GM23248 (cell line): ENCODE measurements at regions of chr5 and their contacts with region 1.

Region 1: DNA sequence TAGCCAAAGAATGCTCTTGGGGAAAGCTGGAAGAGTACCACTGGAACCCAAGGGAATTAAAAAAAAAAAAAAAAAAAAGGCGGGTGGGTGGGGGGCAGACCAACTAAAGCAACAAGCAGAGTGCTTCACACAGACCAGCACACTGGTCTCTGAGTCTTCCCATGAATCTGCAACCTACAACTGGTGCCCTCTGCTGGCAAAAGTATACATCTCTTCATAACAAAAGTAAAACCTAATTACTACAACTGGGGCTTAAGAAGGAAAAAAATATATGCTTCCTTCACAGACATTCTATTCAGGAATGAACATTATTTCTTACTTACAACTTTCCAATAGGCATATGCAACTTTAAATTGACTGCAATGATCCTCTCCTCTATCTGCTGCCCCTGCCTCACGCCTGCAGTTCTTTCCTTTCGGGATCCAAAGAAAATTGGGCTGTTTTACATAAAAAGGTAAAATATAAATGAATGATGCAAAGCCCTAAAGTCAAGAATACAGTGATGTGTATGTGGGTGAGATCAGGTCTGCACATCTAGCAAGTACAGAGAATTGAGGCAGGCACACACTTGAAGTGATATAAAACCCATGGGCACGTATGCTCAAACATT is 7.2 kb upstream of the KLHL3 start:
- DNase-seq: peak; percentile 84
- H3K4me3 ChIP-seq: no peak overlapping the region
- H3K27ac ChIP-seq: no peak overlapping the region
- H3K4me1 ChIP-seq: no peaks in the 10 kb centered on the region
- H3K27me3 ChIP-seq: no peaks in the 10 kb centered on the region

Region 2: GRCh38 chr5:137264573-137264972 is 478.6 kb before region 1 on chr5:
- in situ Hi-C with region 1: no loop called
- DNase-seq: peak; percentile 92
- H3K4me3 ChIP-seq: 0 out of 2 replicates have a peak overlapping the region, but pooled peaks have one; percentile 10
- H3K27ac ChIP-seq: peak overlapping the region; percentile 57
- H3K4me1 ChIP-seq: peaks cover 34% of the 10 kb centered on the region
- H3K27me3 ChIP-seq: peaks cover 9% of the 10 kb centered on the region; the same call in 1 of the 2 replicates

Region 3: GRCh38 chr5:137344723-137345322 is 398.3 kb before region 1 on chr5:
- in situ Hi-C with region 1: loop called (anchors 25 kb)
- DNase-seq: peak; percentile 74
- H3K4me3 ChIP-seq: no peak overlapping the region
- H3K27ac ChIP-seq: no peak overlapping the region
- H3K4me1 ChIP-seq: peaks cover 17% of the 10 kb centered on the region
- H3K27me3 ChIP-seq: no peaks in the 10 kb centered on the region